ENCODE measurements at regions of chr10 and their contacts with region 1.

Region 1: DNA sequence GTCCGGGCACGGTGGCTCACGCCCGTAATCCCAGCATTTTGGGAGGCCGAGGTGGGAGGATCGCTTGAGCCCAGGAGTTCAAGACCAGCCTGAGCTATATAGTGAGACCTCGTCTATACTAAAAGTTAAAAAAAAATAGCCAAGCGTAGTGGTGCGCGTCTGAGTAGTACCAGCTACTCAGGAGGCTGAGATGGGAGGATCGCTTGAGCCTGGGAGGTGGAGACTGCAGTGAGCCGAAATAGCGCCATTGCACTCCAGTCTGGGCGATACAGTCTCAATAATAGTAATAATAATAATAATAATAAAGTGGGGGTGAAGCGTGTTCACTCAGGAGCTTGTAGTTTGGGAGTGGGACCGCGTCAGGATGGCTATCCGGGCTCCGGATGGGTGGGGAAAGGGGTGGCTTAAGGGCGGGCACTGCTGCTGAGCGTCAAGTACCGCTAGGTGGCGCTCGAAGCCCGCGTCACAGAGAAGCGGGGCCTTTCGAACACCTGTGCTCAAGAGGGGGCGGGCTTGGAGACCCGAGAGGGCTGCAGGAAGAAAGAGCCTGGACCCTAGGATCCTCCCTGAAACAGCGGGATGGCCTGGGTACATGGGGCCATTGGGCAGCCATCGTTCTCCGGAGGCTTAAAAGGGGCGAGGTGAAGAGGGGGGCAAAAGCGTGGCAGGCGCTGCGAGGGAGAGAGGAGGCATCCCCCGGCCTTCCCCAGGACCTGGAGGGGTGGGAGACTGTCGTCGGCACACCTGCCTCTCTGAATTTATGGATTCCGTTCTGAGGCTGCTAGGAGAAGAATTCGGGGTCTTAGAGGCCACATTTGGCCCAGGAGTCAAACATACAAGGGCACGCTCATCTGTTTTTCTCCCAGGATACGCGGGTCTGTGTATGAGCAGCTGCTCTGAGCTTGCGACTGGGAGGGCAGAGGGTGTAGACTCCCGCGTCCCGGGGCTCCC is 14.5 kb downstream of the LBX1 start:
- DNase-seq: peak; percentile 10
- H3K4me3 ChIP-seq: no peak overlapping the region
- H3K27ac ChIP-seq: no peak overlapping the region
- H3K27me3 ChIP-seq: peaks cover 76% of the 10 kb centered on the region
- CTCF ChIP-seq: peak; percentile 92

Region 2: DNA sequence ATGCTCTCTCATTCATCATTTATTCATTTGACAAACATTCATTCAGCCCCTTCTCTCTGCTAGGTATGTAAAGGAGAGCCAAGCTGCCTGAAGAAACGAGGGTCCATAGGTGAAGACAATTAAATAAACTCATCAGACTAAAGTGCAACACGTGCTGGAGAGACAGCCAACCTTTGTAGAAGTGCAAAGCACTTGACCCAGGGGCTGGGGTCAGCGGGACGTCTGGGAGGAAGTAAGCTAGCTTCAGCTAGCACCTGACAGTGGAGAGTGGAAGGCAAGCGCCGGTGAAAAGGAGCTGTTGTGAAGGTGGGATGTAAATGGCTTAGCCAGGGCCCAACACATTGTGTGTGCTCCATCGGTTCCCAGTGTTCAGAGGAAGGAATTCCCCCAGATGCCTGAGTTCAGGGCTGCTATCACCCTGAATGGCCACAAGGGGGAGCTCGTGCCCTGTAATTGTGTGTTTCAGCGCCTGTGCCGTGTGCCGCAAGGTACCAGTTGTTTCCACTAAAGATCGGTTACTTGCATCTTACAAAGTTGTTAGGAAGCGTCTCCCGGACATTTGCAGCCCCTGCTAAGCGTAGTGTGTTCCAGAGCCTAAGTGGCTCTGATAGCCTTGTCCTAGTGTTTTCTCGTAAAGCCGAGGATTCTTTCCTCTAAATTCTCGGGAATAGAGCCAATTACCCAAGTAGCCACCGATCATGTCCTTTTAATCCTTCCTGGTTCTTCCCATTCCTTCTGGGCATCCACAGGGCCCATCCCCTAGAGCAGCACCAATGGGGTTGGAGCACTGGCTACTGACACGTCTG is 53.0 kb before region 1 on chr10:
- CTCF ChIA-PET with region 1: interaction called, 10 read pairs
- POLR2A ChIA-PET with region 1: no interaction called
- DNase-seq: peak; percentile 43
- H3K4me3 ChIP-seq: peak overlapping the region; percentile 57
- H3K27ac ChIP-seq: no peak overlapping the region
- H3K27me3 ChIP-seq: peaks cover 42% of the 10 kb centered on the region
- CTCF ChIP-seq: peak; percentile 94

Region 3: GRCh38 chr10:101272229-101272868 is 57.6 kb after region 1 on chr10:
- CTCF ChIA-PET with region 1: interaction called, 11 read pairs
- POLR2A ChIA-PET with region 1: no interaction called
- DNase-seq: peak; percentile 21
- H3K4me3 ChIP-seq: no peak overlapping the region
- H3K27ac ChIP-seq: no peak overlapping the region
- H3K27me3 ChIP-seq: peaks cover 17% of the 10 kb centered on the region
- CTCF ChIP-seq: peak; percentile 79

Region 4: GRCh38 chr10:101453791-101454718 is 239.3 kb after region 1 on chr10:
- CTCF ChIA-PET with region 1: interaction called, 11 read pairs
- POLR2A ChIA-PET with region 1: no interaction called
- DNase-seq: no peak
- H3K4me3 ChIP-seq: no peak overlapping the region
- H3K27ac ChIP-seq: no peak overlapping the region
- H3K27me3 ChIP-seq: no peaks in the 10 kb centered on the region
- CTCF ChIP-seq: no peak

Region 5: GRCh38 chr10:101569838-101570766 is 355.4 kb after region 1 on chr10:
- CTCF ChIA-PET with region 1: interaction called, 132 read pairs
- POLR2A ChIA-PET with region 1: no interaction called
- DNase-seq: peak; percentile 21
- H3K4me3 ChIP-seq: peak overlapping the region; percentile 68
- H3K27ac ChIP-seq: no peak overlapping the region
- H3K27me3 ChIP-seq: peaks cover 35% of the 10 kb centered on the region
- CTCF ChIP-seq: peak; percentile 70

Region 6: DNA sequence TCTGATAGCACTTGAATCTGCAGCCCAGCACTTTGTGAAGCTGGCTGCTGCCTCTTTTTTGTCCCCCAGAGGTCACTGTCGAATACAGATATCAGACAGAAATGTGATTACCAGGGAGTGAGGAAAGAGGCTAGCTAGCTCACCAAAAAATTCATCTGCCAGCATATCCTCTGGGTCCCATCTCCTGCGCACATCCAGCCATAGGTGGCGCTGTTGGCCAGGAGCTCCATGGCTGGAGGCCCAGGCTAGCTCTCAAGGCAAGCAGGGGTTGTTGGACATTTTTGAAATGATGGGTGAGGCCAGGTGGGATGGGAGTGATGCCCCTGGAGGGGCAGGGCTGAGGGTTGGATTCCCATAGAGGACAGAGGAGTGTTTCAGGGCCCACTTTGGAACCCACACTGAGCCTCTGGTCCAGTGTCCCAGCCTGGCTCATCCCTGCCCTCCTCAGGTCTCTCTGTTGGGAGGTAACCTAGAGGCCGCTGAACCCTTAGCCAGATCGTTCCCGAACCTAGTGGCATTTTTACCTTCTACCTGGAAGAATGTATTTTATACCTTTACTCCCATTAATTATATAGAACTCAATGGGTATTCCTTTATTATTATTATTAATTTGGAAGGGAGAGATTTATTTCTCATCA is 388.2 kb after region 1 on chr10:
- CTCF ChIA-PET with region 1: interaction called, 15 read pairs
- POLR2A ChIA-PET with region 1: no interaction called
- DNase-seq: peak; percentile 33
- H3K4me3 ChIP-seq: no peak overlapping the region
- H3K27ac ChIP-seq: no peak overlapping the region
- H3K27me3 ChIP-seq: no peaks in the 10 kb centered on the region
- CTCF ChIP-seq: peak; percentile 94

Measured in AG04450 (cell line).